Activated B cell treated with CpG ODN at 0.5 μM for 24 hours (primary cell): ENCODE measurements at regions of chr7 and their contacts with region 1.

Region 1: DNA sequence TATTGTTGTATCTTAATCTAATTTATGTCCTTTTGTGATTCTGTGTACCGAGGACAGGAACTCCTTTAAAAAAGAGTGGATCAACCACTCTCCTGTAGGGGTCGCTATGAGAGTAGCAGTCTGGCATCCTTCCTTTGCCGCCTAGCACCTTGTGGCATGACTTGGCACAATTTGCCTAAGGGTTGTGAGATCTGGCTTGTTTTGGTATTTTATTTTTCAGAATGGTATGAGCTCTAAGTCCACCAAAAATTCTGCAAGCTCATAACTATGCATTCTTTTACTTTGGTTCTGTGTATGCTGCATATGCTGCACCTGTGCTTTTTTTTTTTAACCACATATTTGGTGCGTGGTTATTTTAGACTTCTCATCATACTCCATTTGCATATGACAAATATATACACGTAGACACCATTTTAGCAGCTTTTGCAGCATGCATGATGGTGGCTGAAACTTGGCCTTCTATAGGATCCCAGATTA is 112.8 kb downstream of the CDK14 start:
- DNase-seq: no peak
- ATAC-seq: peak; percentile 40
- H3K4me3 Mint-ChIP-seq: peak overlapping the region; percentile 86
- H3K27ac Mint-ChIP-seq: peak overlapping the region; percentile 96
- H3K4me1 Mint-ChIP-seq: peaks cover 81% of the 10 kb centered on the region
- H3K27me3 Mint-ChIP-seq: no peaks in the 10 kb centered on the region
- CTCF ChIP-seq: no peak

Region 2: GRCh38 chr7:90595801-90596671 is 112.8 kb before region 1 on chr7 and contains the start of gene CDK14:
- CTCF ChIA-PET with region 1: interaction called, 5 read pairs
- POLR2A ChIA-PET with region 1: interaction called, 5 read pairs
- intact Hi-C with region 1: loop called (anchors 1 kb)
- DNase-seq: peak; percentile 79
- ATAC-seq: peak; percentile 66
- H3K4me3 Mint-ChIP-seq: peak within 1 kb of the TSS; percentile 96
- H3K27ac Mint-ChIP-seq: peak within 1 kb of the TSS; percentile 95
- H3K4me1 Mint-ChIP-seq: peaks cover 56% of the 10 kb centered on the region
- H3K27me3 Mint-ChIP-seq: no peaks in the 10 kb centered on the region
- CTCF ChIP-seq: no peak
- total RNA-seq, gene CDK14: 130 and 140 TPM in 2 replicates

Region 3: DNA sequence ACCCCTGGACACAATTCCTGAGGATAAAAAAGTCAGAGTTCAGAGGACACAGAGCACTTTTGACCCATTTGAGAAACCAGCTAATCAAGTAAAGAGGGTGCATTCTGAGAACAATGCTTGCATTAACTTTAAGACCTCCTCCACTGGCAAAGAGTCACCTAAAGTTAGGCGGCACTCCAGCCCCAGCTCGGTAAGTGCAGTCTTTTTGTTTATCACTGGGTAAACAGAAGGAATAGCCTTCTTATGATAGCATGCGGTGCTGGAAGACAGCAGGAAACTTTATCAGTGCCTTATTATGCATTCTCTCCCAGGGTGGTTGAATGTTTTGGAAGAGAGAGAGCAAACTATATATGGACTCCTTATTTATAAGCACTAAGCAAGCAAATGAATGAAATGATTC is 17.7 kb after region 1 on chr7:
- CTCF ChIA-PET with region 1: interaction called, 6 read pairs
- POLR2A ChIA-PET with region 1: interaction called, 22 read pairs
- intact Hi-C with region 1: loop called (anchors 1 kb)
- DNase-seq: no peak
- ATAC-seq: no peak
- H3K4me3 Mint-ChIP-seq: peak overlapping the region; percentile 74
- H3K27ac Mint-ChIP-seq: peak overlapping the region; percentile 90
- H3K4me1 Mint-ChIP-seq: peaks cover 94% of the 10 kb centered on the region
- H3K27me3 Mint-ChIP-seq: no peaks in the 10 kb centered on the region
- CTCF ChIP-seq: no peak

Region 4: GRCh38 chr7:90816511-90817142 is 107.7 kb after region 1 on chr7:
- CTCF ChIA-PET with region 1: no interaction called
- POLR2A ChIA-PET with region 1: interaction called, 7 read pairs
- intact Hi-C with region 1: loop called (anchors 1 kb)
- DNase-seq: no peak
- ATAC-seq: peak; percentile 94
- H3K4me3 Mint-ChIP-seq: peak overlapping the region; percentile 72
- H3K27ac Mint-ChIP-seq: peak overlapping the region; percentile 90
- H3K4me1 Mint-ChIP-seq: peaks cover 38% of the 10 kb centered on the region
- H3K27me3 Mint-ChIP-seq: no peaks in the 10 kb centered on the region
- CTCF ChIP-seq: no peak

Region 5: GRCh38 chr7:91089382-91089963 is 380.6 kb after region 1 on chr7:
- CTCF ChIA-PET with region 1: no interaction called
- POLR2A ChIA-PET with region 1: no interaction called
- intact Hi-C with region 1: loop called (anchors 2 kb)
- DNase-seq: no peak
- ATAC-seq: peak; percentile 58
- H3K4me3 Mint-ChIP-seq: peak overlapping the region; percentile 19
- H3K27ac Mint-ChIP-seq: no peak overlapping the region
- H3K4me1 Mint-ChIP-seq: peaks cover 6% of the 10 kb centered on the region
- H3K27me3 Mint-ChIP-seq: no peaks in the 10 kb centered on the region
- CTCF ChIP-seq: peak; percentile 92